Prostate gland (tissue), 2 donors: ENCODE measurements at regions of chr17 and their contacts with region 1.

Region 1: DNA sequence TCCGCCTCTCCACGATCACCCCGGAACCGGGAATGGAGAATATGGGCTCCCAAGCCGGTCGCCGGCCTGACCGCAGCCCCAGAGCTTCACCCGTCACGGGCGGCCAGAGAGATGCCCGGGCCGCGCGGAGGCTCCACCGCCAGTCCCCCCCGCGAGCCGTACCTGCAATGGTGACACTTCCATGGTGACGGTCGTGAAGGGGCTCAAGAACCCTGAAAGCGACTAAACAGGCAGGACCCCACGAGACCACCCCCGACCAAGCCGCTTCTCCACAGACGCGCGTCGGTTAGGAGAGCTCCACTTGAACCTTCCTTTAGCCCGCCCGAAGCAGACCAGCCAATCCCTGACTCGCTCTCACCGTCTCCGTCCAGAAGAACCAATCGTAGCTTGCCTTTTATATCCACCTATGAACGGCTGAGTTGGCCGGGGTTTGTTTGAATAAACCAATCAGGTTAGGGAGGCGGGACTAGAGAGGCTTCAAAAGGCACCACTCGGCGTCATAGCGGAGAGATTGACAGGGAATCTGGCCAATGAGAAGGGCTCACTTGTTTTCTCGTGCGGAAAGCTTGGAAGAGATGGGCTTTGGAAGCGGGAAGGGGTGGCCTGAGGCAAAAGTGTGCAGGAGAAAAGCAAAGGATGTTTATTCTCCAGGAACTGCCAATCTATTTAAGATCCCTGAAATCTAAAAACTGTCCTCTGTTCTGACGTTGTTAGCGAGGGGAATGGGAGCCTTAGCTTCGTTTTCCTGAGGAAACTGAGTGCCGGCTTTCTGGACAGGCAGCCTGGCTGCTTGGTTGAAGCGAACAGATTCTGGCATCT is at the start of gene TOP2A:
- DNase-seq: peak; percentile 100
- H3K4me3 ChIP-seq: peak within 1 kb of the TSS; percentile 34 to 37
- H3K27ac ChIP-seq: peak within 1 kb of the TSS; percentile 24 to 69
- H3K4me1 ChIP-seq: no peaks in the 10 kb centered on the region
- H3K27me3 ChIP-seq: no peaks in the 10 kb centered on the region
- CTCF ChIP-seq: no peak
- POLR2A ChIP-seq: peak; percentile 35
- total RNA-seq, gene TOP2A: 3.1 to 15.9 TPM

Region 2: GRCh38 chr17:40317880-40318829 is 99.7 kb before region 1 on chr17:
- intact Hi-C with region 1: loop called (anchors 10 kb)
- DNase-seq: peak; percentile 98
- H3K4me3 ChIP-seq: peak overlapping the region; percentile 89 to 98
- H3K27ac ChIP-seq: peak overlapping the region; percentile 82 to 83
- H3K4me1 ChIP-seq: peaks cover 41% of the 10 kb centered on the region
- H3K27me3 ChIP-seq: no peaks in the 10 kb centered on the region
- CTCF ChIP-seq: peak in 1 of 4 experiments; percentile 9
- POLR2A ChIP-seq: peak; percentile 83

Region 3: DNA sequence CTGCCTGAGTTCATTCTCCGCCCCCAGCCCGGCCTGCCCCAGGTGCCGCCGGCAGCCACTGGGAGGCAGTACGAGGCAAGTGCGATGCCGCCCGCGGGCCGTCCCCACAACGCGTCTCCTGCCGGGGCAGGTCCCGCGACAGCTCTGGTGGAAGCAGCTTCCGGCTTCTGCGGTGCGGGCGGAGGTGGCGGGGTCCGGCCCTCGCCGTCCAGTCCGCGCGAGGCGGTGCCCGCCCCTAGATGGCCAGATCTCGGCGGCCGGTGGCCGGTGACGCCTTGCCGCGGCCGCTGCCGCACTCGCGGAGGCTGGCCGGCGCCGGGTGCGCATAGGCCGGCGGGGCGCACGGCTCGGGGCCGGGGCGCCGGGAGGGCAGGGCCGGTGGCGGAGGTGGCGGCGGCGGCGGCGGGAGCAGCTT is 55.1 kb before region 1 on chr17:
- intact Hi-C with region 1: loop called (anchors 5 kb)
- DNase-seq: no peak
- H3K4me3 ChIP-seq: peak overlapping the region; percentile 38 to 42
- H3K27ac ChIP-seq: no peak overlapping the region
- H3K4me1 ChIP-seq: no peaks in the 10 kb centered on the region
- H3K27me3 ChIP-seq: no peaks in the 10 kb centered on the region
- CTCF ChIP-seq: peak in 2 of 4 experiments; percentile 52 to 80
- POLR2A ChIP-seq: no peak

Region 4: DNA sequence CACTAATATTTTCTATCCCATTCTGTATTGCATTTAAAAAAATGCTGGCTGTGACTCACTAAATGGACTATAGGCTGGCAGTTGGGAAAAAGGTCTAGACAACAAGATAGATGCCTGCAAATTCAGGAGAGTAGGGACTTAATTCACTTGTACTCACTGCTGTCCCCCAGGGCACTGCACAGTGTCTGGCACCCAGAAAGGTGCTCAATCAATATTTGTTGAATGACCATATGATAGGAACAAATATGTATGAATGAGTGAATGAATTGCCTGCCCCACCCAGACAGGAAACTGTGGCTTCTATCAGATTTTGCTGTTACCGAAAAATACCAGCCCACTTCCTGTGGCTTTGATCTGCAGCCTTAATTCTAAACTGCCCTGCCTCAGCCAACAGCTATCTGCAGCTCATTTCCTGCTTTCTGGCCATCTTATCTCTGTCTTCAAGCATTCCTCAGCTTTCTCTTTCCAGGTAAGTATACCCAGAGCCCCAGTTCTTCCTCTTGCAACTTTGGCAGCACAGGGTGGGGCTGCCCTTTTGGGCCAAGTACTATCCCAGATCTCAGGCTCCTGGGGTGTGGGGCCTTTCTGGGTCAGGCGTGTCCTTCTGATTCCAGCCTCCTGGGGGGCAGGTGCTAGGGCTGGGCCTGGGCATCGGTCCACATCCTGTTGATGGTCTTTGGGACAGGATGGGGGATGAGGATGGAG is 98.9 kb after region 1 on chr17:
- intact Hi-C with region 1: no loop called
- DNase-seq: no peak
- H3K4me3 ChIP-seq: no peak overlapping the region
- H3K27ac ChIP-seq: no peak overlapping the region
- H3K4me1 ChIP-seq: no peaks in the 10 kb centered on the region
- H3K27me3 ChIP-seq: no peaks in the 10 kb centered on the region
- CTCF ChIP-seq: no peak
- POLR2A ChIP-seq: no peak